Activated CD4-positive, alpha-beta memory T cell treated with anti-CD3 and anti-CD28 coated beads for 36 hours (primary cell): ENCODE measurements at regions of chr7 and their contacts with region 1.

Region 1: DNA sequence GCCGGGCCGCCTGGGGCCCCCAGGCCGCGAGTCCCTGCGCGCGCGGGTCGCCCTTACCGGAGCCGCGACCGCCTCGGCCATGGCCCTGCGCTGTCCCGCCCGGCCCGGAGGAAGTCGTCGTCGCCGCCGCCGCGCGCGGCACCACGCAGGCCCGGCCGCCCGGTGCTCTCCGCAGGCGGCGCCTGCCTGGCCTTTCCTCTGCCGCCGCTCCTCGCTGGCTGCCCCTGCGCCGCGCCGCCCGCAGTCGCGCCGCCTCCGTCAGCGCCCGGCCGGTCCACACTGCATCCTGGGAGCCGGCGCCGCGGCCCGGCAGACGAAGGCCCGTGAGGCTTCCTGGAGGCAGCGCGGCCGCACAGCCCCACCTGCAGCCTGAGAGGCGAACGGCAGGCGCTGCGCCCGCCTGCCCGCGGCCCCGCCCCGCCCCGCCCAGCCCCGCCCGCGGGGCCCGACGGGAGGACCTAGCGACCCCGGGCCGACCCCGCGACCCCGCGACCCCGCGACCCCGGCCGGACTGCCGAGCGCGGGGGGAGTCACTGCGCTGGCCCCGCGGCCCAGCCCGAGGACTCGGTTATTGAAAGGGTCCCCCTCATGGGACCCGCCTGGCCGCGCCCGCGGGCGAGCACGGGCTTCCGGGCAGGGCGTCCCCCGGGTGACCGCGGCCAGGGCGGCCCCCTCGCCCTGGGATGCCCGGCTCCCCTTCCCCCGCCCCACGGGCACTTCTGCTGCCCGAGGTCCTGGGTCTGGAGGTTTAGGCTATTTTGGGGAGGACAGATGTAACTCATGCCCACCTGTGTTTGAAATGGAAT is at the start of gene ZNF746:
- DNase-seq: peak; percentile 89
- H3K4me3 Mint-ChIP-seq: peak within 1 kb of the TSS; percentile 98
- H3K27ac Mint-ChIP-seq: peak within 1 kb of the TSS; percentile 94
- H3K4me1 Mint-ChIP-seq: peaks cover 30% of the 10 kb centered on the region
- H3K27me3 Mint-ChIP-seq: peaks cover 2% of the 10 kb centered on the region
- total RNA-seq, gene ZNF746: 13.5 to 14.9 TPM

Region 2: DNA sequence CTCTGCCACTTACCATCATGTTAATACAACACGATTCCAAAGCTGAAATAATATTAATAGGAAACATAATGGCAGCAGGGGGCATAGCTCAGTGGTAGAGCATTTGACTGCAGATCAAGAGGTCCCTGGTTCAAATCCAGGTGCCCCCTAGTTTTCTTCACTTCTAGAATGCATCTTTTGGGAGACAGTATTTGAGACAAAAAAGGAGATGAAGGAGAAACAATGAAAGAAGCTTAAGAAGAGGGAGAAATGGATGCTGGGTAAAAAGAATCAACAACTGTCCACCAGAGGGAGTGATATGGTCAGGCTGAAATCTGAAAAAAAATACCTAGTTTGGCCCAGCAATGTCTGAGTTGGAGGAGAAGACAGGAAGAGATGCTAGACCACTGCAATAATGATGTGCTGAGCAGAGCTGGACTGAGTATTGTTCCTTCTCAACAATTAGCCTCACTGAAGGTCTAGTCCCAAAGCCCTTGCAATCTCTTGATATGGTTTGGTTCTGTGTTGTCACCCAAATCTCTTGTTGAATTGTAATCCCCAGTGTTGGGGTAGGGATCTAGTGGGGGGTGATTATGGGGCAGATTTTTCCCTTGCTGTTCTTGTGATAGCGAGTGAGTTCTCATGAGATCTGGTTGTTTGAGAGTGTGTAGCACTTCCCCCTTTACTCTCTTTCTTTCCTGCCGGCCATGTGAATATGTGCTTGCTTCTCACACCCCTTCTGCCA is 187.4 kb before region 1 on chr7:
- CTCF ChIA-PET with region 1: interaction called, 5 read pairs
- POLR2A ChIA-PET with region 1: interaction called, 3 read pairs
- intact Hi-C with region 1: loop called (anchors 5 kb)
- DNase-seq: no peak
- H3K4me3 Mint-ChIP-seq: no peak overlapping the region
- H3K27ac Mint-ChIP-seq: no peak overlapping the region
- H3K4me1 Mint-ChIP-seq: no peaks in the 10 kb centered on the region
- H3K27me3 Mint-ChIP-seq: no peaks in the 10 kb centered on the region

Region 3: DNA sequence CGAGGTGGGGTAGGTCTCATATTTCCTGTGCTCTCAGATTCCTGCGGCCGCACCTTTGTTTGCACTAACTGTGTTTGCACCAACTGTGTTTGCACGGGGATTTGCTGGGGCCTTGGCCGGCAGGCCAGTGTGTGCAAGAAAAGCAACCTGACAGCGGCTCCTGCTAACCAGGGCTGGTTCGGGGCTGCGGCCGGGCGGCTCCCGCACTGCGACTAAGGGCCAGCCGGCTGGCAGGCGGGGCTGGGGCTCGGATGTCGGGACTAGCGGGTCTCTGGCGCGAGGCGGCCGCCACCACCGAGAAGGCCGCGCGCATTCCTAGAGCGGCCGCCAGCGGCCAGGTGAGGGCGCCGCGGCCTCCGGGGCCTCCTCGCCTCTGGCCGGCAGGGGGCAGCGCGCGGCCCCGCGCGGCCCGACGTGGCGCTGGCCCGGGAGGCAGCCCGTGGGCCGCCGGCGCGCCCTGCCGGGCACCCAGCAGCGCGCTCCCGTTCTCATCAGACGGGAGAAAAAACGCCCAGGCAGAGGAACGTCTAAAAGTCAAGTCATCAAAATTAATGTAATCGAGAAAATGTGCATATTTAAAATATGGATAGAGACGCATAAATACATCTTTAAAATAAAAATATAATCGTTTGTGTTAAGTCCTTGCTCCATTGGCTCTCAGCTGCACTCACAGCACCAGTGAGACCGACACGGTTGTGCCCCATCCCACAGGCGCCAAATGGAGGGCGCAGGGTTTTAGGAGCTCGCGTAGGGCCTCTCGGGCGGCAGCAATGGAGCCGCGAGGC is 75.3 kb before region 1 on chr7:
- CTCF ChIA-PET with region 1: interaction called, 13 read pairs
- POLR2A ChIA-PET with region 1: no interaction called
- intact Hi-C with region 1: loop called (anchors 1 kb)
- DNase-seq: peak; percentile 80
- H3K4me3 Mint-ChIP-seq: peak overlapping the region; percentile 72
- H3K27ac Mint-ChIP-seq: peak overlapping the region; percentile 51
- H3K4me1 Mint-ChIP-seq: peaks cover 9% of the 10 kb centered on the region
- H3K27me3 Mint-ChIP-seq: no peaks in the 10 kb centered on the region

Region 4: GRCh38 chr7:149460493-149461277 is 37.0 kb before region 1 on chr7 and contains the start of gene ZNF777:
- CTCF ChIA-PET with region 1: interaction called, 6 read pairs
- POLR2A ChIA-PET with region 1: no interaction called
- intact Hi-C with region 1: loop called (anchors 1 kb)
- DNase-seq: peak; percentile 88
- H3K4me3 Mint-ChIP-seq: peak within 1 kb of the TSS; percentile 82
- H3K27ac Mint-ChIP-seq: peak within 1 kb of the TSS; percentile 44
- H3K4me1 Mint-ChIP-seq: peaks cover 19% of the 10 kb centered on the region
- H3K27me3 Mint-ChIP-seq: peaks cover 2% of the 10 kb centered on the region
- total RNA-seq, gene ZNF777: 10.1 to 11.4 TPM

Region 5: GRCh38 chr7:149547126-149547525 is 49.5 kb after region 1 on chr7:
- CTCF ChIA-PET with region 1: no interaction called
- POLR2A ChIA-PET with region 1: no interaction called
- intact Hi-C with region 1: no loop called
- DNase-seq: no peak
- H3K4me3 Mint-ChIP-seq: no peak overlapping the region
- H3K27ac Mint-ChIP-seq: no peak overlapping the region
- H3K4me1 Mint-ChIP-seq: peaks cover 6% of the 10 kb centered on the region
- H3K27me3 Mint-ChIP-seq: no peaks in the 10 kb centered on the region

Region 6: GRCh38 chr7:149598721-149599306 is 101.2 kb after region 1 on chr7:
- CTCF ChIA-PET with region 1: no interaction called
- POLR2A ChIA-PET with region 1: interaction called, 3 read pairs
- intact Hi-C with region 1: loop called (anchors 1 kb)
- DNase-seq: peak; percentile 66
- H3K4me3 Mint-ChIP-seq: no peak overlapping the region
- H3K27ac Mint-ChIP-seq: peak overlapping the region; percentile 72
- H3K4me1 Mint-ChIP-seq: peaks cover 35% of the 10 kb centered on the region
- H3K27me3 Mint-ChIP-seq: no peaks in the 10 kb centered on the region